Heart left ventricle (tissue), 16 donors: ENCODE measurements at regions of chr7 and their contacts with region 1.

Region 1: DNA sequence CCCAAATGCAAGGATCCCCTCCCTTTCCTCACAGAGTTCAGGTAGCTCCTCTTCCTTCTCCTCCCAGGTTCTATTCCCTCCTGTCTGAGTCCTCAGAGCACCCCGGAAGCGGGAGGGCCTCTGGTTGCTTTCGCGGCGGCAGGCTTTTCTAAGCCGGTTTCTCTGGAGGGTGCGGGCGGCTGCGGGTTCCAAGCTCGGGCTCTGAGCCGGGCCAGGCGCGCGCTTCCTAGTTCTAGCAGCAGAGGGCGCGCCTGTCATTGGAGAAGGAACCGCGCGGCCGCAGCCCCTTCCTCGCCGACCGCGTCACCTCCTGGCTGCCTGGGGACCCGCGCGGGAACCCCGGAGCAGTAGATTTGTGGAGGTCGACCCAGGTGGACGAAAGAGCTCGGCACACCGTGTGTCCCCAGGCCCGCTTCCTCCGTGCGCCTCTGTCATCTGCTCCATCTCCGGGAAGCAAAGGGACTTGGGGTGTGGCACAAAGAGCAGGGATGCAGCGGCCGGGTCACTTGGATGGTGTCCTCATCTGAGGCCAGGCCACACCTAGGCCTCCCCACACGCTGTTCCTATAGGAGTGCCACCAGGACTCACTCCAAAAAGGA is 389.0 kb upstream of the PODXL start:
- DNase-seq: peak; percentile 23 to 76 (median 34)
- ATAC-seq: peak in 3 of 4 donors; percentile 58 to 73 (median 59)
- H3K4me3 ChIP-seq: peak overlapping the region in 8 of 12 donors; percentile 19 to 40 (median 29)
- H3K27ac ChIP-seq: no peak overlapping the region
- H3K4me1 ChIP-seq: peaks cover 0 to 21% (median 3%) of the 10 kb centered on the region in 12 donors
- H3K27me3 ChIP-seq: peaks cover 0 to 46% (median 9%) of the 10 kb centered on the region in 9 donors
- CTCF ChIP-seq: peak; percentile 73 to 94 (median 85)
- POLR2A ChIP-seq: no peak

Region 2: GRCh38 chr7:132049462-132050304 is 104.3 kb after region 1 on chr7:
- intact Hi-C with region 1: loop called in 4 of 10 experiments (anchors 2 to 10 kb)
- DNase-seq: no peak
- ATAC-seq: no peak
- H3K4me3 ChIP-seq: no peak overlapping the region
- H3K27ac ChIP-seq: no peak overlapping the region
- H3K4me1 ChIP-seq: peaks cover 0 to under 1% (median 0%) of the 10 kb centered on the region in 12 donors
- H3K27me3 ChIP-seq: peaks cover 0 to 5% (median 0%) of the 10 kb centered on the region in 9 donors
- CTCF ChIP-seq: peak; percentile 50 to 67 (median 56)
- POLR2A ChIP-seq: no peak

Region 3: GRCh38 chr7:132145466-132145865 is 200.1 kb after region 1 on chr7:
- intact Hi-C with region 1: loop called in 2 of 10 experiments (anchors 10 kb)
- DNase-seq: peak in 3 of 5 donors; percentile 20 to 54 (median 51)
- ATAC-seq: peak; percentile 37 to 95 (median 82)
- H3K4me3 ChIP-seq: no peak overlapping the region
- H3K27ac ChIP-seq: no peak overlapping the region
- H3K4me1 ChIP-seq: peaks cover 0 to 18% (median 5%) of the 10 kb centered on the region in 12 donors
- H3K27me3 ChIP-seq: no peaks in the 10 kb centered on the region
- CTCF ChIP-seq: peak in 2 of 12 donors; percentile 10 to 22
- POLR2A ChIP-seq: no peak

Region 4: DNA sequence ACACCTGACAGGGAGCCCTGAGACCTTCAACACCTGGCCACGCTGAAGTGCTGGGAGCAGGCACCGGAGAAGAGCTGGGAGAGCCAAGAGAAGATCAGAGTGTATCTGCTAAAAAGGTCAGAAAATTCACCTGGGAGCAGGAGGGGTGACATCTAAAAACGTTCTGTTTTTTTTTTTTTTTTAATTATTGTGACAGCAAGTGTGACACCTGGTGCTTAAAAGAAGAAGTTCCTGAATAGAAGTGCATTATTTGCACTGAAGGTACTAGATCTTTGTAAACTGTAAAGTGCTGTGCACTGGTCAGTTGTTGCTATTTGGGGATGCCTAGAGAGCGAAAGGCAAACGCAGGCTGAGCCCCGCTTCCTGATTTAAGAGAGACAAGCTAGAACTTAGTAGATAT is 208.8 kb after region 1 on chr7:
- intact Hi-C with region 1: loop called in 2 of 10 experiments (anchors 10 kb)
- DNase-seq: no peak
- ATAC-seq: no peak
- H3K4me3 ChIP-seq: no peak overlapping the region
- H3K27ac ChIP-seq: no peak overlapping the region
- H3K4me1 ChIP-seq: no peaks in the 10 kb centered on the region
- H3K27me3 ChIP-seq: no peaks in the 10 kb centered on the region
- CTCF ChIP-seq: peak in 1 of 12 donors; percentile 10
- POLR2A ChIP-seq: no peak

Region 5: GRCh38 chr7:132218876-132219275 is 273.5 kb after region 1 on chr7:
- intact Hi-C with region 1: no loop called
- DNase-seq: no peak
- ATAC-seq: no peak
- H3K4me3 ChIP-seq: no peak overlapping the region
- H3K27ac ChIP-seq: no peak overlapping the region
- H3K4me1 ChIP-seq: peaks cover 0 to 2% (median 0%) of the 10 kb centered on the region in 12 donors
- H3K27me3 ChIP-seq: no peaks in the 10 kb centered on the region
- CTCF ChIP-seq: no peak
- POLR2A ChIP-seq: no peak

Region 6: DNA sequence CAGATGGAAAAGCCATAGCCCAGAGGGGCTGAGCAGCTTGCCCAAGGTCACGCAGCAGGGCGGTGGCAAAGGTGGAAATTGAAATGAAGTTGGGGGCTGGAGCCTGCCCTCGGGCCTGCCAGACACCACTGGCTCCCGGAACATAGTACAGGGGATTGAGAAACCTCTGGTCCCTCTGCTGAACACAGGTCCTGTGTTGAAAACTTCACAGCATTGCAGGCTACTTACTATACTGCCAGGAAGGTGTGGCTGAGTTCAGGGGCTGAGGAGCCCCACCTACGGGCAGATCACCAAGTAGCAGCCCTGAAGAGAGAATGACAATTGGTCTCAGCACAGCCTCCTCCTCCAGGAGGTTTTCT is 304.2 kb after region 1 on chr7:
- intact Hi-C with region 1: loop called (anchors 2 to 10 kb)
- DNase-seq: no peak
- ATAC-seq: peak in 2 of 4 donors; percentile 61 to 62
- H3K4me3 ChIP-seq: no peak overlapping the region
- H3K27ac ChIP-seq: no peak overlapping the region
- H3K4me1 ChIP-seq: peaks cover 0 to 28% (median 10%) of the 10 kb centered on the region in 12 donors
- H3K27me3 ChIP-seq: no peaks in the 10 kb centered on the region
- CTCF ChIP-seq: peak in 8 of 12 donors; percentile 6 to 36 (median 24)
- POLR2A ChIP-seq: no peak

Region 7: DNA sequence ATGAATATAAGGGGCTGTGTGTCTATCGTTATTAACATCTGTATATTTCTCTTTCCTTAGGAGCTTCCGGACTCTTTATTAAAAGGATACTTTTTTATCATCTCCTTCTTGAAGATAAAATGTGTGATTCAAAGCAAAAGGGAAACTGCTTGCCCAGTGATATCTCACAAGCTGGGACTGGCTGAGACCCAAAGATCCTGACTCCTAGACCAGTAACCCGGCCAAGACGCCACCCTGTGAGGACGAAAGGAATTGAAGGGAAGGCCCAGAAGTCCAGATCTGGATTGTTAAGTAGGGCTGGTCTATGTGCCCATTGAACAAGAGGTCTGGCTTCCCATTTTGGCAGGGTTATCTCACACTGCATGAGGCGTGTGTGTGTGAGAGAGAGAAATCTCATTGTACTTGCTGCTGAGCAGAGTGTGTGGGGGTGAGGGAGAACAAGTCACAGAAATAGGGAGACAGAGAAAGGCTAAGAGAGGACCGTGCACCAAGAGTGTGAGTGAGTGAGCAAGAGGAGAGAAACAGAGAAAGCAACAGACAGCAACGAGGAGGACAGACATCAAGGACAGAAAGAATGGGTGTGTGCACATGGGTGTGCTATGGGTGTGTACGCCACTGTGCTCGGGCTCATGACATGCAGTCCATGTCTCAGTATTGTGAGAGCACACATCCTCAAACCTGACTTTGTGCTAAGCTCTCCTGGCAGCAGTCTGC is 555.5 kb after region 1 on chr7:
- intact Hi-C with region 1: loop called in 1 of 10 experiments (anchors 10 kb)
- DNase-seq: peak in 4 of 5 donors; percentile 64 to 82 (median 73)
- ATAC-seq: peak; percentile 81 to 92 (median 85)
- H3K4me3 ChIP-seq: no peak overlapping the region
- H3K27ac ChIP-seq: peak overlapping the region in 3 of 12 donors; percentile 0 to 37 (median 34)
- H3K4me1 ChIP-seq: peaks cover 0 to 29% (median 6%) of the 10 kb centered on the region in 12 donors
- H3K27me3 ChIP-seq: no peaks in the 10 kb centered on the region
- CTCF ChIP-seq: peak; percentile 15 to 63 (median 50)
- POLR2A ChIP-seq: no peak